ENCODE measurements at regions of chr20 and their contacts with region 1.

Region 1: DNA sequence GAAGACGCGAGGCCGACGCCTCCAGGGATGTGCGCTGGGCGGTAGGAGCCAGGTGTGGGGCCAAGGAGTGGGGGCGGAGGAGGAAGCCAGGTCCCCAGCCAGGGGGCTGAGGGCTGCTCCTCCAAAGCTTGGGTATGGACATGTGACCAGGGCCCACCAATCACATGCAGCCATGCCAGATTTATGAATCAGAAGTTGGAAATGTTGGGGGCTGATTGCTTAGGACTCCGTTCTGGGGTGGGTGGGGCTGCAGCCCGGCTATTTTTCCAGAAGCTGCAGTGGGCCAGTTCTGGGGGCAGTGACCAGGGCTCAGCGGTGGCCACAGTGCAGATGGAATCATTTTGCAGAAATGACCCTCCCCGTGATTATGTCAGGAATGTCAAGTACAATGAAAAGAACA is 96.0 kb downstream of the CEBPB start:
- DNase-seq: peak in 3 of 5 donors; percentile 57 to 76 (median 58)
- ATAC-seq: peak in 3 of 4 donors; percentile 31 to 76 (median 53)
- H3K4me3 ChIP-seq: peak overlapping the region in 6 of 12 donors; percentile 6 to 44 (median 24)
- H3K27ac ChIP-seq: peak overlapping the region; percentile 48 to 87 (median 78)
- H3K4me1 ChIP-seq: peaks cover 0 to 62% (median 22%) of the 10 kb centered on the region in 12 donors
- H3K27me3 ChIP-seq: no peaks in the 10 kb centered on the region
- CTCF ChIP-seq: no peak
- POLR2A ChIP-seq: no peak

Region 2: GRCh38 chr20:50308513-50309279 is 22.1 kb after region 1 on chr20:
- intact Hi-C with region 1: loop called in 1 of 10 experiments (anchors 2 kb)
- DNase-seq: peak; percentile 91 to 97 (median 93)
- ATAC-seq: peak; percentile 61 to 92 (median 82)
- H3K4me3 ChIP-seq: peak overlapping the region in 9 of 12 donors; percentile 16 to 50 (median 35)
- H3K27ac ChIP-seq: peak overlapping the region; percentile 62 to 96 (median 91)
- H3K4me1 ChIP-seq: peaks cover 4 to 79% (median 50%) of the 10 kb centered on the region in 12 donors
- H3K27me3 ChIP-seq: no peaks in the 10 kb centered on the region
- CTCF ChIP-seq: peak in 7 of 12 donors; percentile 13 to 45 (median 32)
- POLR2A ChIP-seq: peak in 1 of 2 donors; percentile 40

Measured in heart left ventricle (tissue), 16 donors.